ENCODE measurements at regions of chrX and their contacts with region 1.

Region 1: GRCh38 chrX:18676470-18676869 is 4.6 kb upstream of the RS1 start:
- DNase-seq: no peak
- H3K4me3 ChIP-seq: no peak overlapping the region
- H3K27ac ChIP-seq: no peak overlapping the region
- H3K27me3 ChIP-seq: no peaks in the 10 kb centered on the region
- CTCF ChIP-seq: peak; percentile 51

Region 2: GRCh38 chrX:18457000-18457399 is 219.5 kb before region 1 on chrX:
- CTCF ChIA-PET with region 1: interaction called, 14 read pairs
- POLR2A ChIA-PET with region 1: no interaction called
- DNase-seq: no peak
- H3K4me3 ChIP-seq: no peak overlapping the region
- H3K27ac ChIP-seq: no peak overlapping the region
- H3K27me3 ChIP-seq: no peaks in the 10 kb centered on the region
- CTCF ChIP-seq: no peak

Region 3: DNA sequence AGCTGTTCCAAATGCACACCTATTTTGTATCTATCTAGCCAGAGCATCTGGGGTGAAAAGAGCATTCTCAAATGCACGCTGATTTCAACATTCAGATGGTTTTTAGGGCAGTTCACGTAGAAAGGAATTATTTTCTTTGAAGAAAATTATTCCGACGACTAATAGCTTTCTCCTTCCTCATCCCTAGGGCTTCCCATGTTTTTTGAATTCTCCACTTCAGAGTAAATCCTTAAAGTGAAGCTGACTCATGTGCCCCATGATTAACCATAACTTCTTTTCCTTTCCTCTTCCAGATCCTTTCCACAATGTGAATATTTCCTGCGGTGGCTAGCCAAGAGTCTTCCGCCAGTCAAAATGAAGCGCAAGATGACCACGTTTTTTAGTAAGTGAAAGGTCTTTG is 580.5 kb after region 1 on chrX:
- CTCF ChIA-PET with region 1: no interaction called
- POLR2A ChIA-PET with region 1: no interaction called
- DNase-seq: no peak
- H3K4me3 ChIP-seq: no peak overlapping the region
- H3K27ac ChIP-seq: no peak overlapping the region
- H3K27me3 ChIP-seq: no peaks in the 10 kb centered on the region
- CTCF ChIP-seq: no peak

Measured in AG04450 (cell line).